Activated CD4-positive, alpha-beta T cell treated with anti-CD3 and anti-CD28 coated beads, Interleukin-2, amount 10 ng/mL, durations not matched to agents 7 days and 5 days (primary cell): ENCODE measurements at regions of chr7 and their contacts with region 1.

Region 1: GRCh38 chr7:134432296-134433152 is 26.4 kb downstream of the AKR1B1 start:
- DNase-seq: peak; percentile 76
- H3K4me3 Mint-ChIP-seq: peak overlapping the region; percentile 67
- H3K27ac Mint-ChIP-seq: peak overlapping the region; percentile 84
- H3K4me1 Mint-ChIP-seq: peaks cover 16% of the 10 kb centered on the region
- H3K27me3 Mint-ChIP-seq: peaks cover 4% of the 10 kb centered on the region

Region 2: DNA sequence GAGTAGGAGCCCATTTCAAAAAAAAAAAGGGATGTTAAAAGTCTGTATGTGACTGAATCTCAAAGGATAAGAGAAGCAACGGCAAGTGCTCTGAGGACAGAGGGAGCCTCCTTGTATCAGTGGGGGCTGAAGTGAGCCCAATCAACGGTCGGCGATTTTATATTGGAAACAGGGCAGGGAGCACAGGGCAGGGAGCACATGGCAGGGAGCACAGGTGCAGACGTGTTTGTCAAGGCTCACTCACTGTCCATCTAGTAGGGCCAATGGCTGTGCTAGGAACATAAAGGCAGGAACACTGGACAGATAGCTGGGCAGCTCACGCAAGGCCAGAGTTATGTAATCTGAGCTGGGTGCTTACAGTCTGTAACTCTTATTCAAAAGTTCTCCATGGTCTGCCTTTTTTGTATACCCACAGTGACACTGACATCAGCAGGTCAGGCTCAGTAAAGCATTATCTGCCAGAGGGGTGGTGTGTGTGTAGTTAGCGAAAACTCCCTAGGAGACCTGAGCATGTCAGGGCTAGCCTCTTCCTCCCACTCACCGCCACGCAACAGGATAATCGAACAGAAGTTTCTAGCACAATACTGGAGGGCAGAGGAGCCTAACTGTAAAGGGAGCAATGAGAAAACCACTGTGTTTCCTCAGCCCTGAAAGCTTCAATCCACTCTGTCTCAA is 11.0 kb after region 1 on chr7:
- CTCF ChIA-PET with region 1: interaction called, 14 read pairs
- POLR2A ChIA-PET with region 1: no interaction called
- DNase-seq: no peak
- H3K4me3 Mint-ChIP-seq: no peak overlapping the region
- H3K27ac Mint-ChIP-seq: no peak overlapping the region
- H3K4me1 Mint-ChIP-seq: no peaks in the 10 kb centered on the region
- H3K27me3 Mint-ChIP-seq: no peaks in the 10 kb centered on the region

Region 3: GRCh38 chr7:134448700-134449229 is 16.2 kb after region 1 on chr7:
- CTCF ChIA-PET with region 1: interaction called, 14 read pairs
- POLR2A ChIA-PET with region 1: no interaction called
- DNase-seq: no peak
- H3K4me3 Mint-ChIP-seq: no peak overlapping the region
- H3K27ac Mint-ChIP-seq: no peak overlapping the region
- H3K4me1 Mint-ChIP-seq: peaks cover 13% of the 10 kb centered on the region
- H3K27me3 Mint-ChIP-seq: no peaks in the 10 kb centered on the region

Region 4: DNA sequence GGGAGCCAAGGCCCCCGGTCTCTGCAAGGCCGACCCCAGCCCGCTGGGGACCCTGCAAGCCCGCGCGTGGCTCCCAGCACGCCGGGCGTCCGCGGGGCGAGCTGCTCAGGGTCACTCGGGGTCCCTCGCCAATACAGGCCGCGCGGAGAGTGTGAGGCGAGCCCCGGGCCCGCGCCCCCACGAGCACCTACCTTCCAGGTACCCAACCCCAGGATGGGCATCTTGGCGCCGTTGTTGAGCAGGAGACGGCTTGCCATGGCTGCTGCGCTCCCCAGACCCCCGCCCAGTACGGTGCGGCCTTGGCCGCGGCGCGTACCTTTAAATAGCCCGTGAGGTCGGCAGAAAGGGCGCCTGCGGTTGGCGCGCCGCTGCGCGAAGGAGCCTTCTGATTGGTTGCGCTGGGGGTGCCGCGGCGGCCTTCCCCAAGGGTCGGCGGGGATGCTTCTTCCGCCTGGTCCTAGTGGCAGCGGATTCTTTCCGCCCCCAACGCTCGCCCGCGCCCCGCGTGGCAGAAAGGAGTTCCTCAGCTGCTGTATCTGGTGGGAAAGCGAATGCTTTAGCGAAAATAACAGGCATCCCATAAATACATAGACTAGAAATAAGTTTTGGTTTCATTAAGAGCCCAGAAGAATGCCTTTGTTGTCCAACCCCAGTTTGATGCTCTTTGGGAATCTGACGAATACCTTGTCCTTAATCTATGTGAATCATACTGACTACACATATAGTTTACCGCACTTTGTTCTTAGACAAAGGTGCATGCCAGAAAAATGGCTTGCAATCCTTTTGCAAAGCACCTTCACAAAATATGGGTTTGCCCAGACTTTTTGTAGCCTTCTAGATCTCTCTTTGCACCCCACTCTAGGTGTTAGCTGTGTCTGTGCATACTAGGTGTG is 26.5 kb after region 1 on chr7 and contains the start of gene AKR1B1:
- CTCF ChIA-PET with region 1: interaction called, 16 read pairs
- POLR2A ChIA-PET with region 1: no interaction called
- DNase-seq: peak; percentile 88
- H3K4me3 Mint-ChIP-seq: peak within 1 kb of the TSS; percentile 80
- H3K27ac Mint-ChIP-seq: peak within 1 kb of the TSS; percentile 86
- H3K4me1 Mint-ChIP-seq: peaks cover 47% of the 10 kb centered on the region
- H3K27me3 Mint-ChIP-seq: no peaks in the 10 kb centered on the region
- total RNA-seq, gene AKR1B1: 98.1 to 106 TPM

Region 5: DNA sequence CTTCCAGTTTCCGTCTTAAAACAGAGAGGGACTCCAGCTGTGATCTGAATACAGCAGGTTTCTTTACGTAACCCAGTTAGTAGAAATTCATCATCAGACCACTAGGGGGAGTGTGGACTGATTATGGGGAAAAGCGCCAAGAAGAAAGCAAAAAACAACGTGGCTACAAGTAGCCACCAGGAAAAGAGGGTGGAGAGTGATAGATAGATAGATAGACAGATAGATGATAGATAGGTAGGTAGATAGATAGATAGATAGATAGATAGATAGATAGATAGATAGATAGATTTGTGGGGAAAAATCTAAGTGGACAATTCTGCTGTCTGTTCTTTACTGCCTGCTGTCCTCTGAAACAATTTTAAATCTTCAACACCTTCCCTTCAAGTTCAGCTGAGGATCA is 82.1 kb after region 1 on chr7:
- CTCF ChIA-PET with region 1: interaction called, 15 read pairs
- POLR2A ChIA-PET with region 1: no interaction called
- DNase-seq: peak; percentile 63
- H3K4me3 Mint-ChIP-seq: no peak overlapping the region
- H3K27ac Mint-ChIP-seq: no peak overlapping the region
- H3K4me1 Mint-ChIP-seq: peaks cover 2% of the 10 kb centered on the region
- H3K27me3 Mint-ChIP-seq: peaks cover 12% of the 10 kb centered on the region

Region 6: DNA sequence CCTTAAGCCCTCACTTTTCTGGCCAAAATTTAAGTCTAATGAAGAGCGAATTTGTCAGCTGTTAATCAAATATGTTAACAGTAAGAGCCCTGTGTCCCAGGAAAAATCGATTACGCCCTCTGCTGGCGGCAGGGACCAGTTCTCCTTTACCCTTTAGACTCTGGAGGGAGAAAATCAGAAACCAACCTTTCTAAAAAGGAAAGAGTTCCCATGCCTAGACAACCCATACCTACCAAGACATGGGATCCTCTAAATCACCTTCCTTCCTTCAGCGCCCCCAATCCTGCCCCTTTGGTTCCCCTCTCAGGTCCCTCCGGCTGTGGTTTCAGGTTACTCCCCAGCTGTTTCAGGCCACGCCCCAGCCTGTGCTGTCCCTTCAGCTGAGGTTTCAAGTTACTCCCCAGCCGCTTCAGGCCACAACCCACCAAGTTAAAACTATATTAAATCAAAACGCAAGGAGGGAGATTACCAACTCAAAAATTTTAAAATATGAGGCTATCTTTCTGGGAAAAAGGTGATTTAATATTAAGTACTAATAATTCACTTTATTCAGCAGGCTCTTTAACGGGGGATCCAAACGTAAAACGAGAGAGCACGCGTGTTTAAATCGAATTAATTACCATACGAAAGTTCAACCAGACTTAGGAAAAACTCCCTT is 115.0 kb after region 1 on chr7:
- CTCF ChIA-PET with region 1: interaction called, 10 read pairs
- POLR2A ChIA-PET with region 1: no interaction called
- DNase-seq: peak; percentile 71
- H3K4me3 Mint-ChIP-seq: no peak overlapping the region
- H3K27ac Mint-ChIP-seq: no peak overlapping the region
- H3K4me1 Mint-ChIP-seq: peaks cover 6% of the 10 kb centered on the region
- H3K27me3 Mint-ChIP-seq: peaks cover 3% of the 10 kb centered on the region